ENCODE measurements at regions of chr9 and their contacts with region 1.

Region 1: DNA sequence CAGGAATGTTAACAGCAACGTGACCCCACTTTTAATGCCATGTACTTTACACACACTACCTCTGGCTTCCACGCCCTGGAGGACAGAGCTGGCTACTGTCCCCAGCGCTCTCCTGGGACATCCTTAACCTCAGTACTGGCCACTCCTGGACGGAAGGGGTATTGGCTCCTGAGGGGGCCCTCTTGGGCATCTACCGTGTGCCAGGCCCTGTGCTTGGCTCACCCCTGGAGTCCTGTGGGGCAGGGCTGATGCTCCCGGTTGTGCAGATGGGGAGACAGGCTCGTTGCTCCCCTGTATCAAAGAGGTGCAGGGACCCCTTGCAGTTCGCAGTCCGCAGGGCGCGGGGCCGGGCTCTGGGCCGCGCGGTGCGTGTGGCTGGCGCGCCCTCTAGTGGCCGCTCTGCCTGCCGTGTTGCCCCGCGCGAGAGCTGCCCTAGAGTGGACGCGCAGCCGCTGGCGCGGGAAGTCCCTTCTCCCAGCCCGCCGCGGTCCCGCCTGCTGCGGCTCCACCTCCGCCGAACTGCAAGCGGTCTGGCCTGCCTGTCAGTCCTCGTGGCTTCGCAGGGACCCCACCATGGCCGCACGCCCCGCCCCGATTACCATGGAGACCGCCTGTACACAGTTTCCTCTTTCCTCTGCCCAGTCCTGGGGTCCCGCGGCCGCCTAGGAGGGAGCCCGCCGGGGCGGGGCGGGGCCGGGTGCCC is at the start of gene WDR38:
- DNase-seq: peak; percentile 94
- H3K27ac ChIP-seq: peak within 1 kb of the TSS; percentile 69
- CTCF ChIP-seq: peak; percentile 100

Region 2: GRCh38 chr9:124735121-124735520 is 117.9 kb before region 1 on chr9:
- CTCF ChIA-PET with region 1: no interaction called
- POLR2A ChIA-PET with region 1: no interaction called
- DNase-seq: peak; percentile 80
- H3K27ac ChIP-seq: peak overlapping the region; percentile 57
- CTCF ChIP-seq: no peak

Region 3: DNA sequence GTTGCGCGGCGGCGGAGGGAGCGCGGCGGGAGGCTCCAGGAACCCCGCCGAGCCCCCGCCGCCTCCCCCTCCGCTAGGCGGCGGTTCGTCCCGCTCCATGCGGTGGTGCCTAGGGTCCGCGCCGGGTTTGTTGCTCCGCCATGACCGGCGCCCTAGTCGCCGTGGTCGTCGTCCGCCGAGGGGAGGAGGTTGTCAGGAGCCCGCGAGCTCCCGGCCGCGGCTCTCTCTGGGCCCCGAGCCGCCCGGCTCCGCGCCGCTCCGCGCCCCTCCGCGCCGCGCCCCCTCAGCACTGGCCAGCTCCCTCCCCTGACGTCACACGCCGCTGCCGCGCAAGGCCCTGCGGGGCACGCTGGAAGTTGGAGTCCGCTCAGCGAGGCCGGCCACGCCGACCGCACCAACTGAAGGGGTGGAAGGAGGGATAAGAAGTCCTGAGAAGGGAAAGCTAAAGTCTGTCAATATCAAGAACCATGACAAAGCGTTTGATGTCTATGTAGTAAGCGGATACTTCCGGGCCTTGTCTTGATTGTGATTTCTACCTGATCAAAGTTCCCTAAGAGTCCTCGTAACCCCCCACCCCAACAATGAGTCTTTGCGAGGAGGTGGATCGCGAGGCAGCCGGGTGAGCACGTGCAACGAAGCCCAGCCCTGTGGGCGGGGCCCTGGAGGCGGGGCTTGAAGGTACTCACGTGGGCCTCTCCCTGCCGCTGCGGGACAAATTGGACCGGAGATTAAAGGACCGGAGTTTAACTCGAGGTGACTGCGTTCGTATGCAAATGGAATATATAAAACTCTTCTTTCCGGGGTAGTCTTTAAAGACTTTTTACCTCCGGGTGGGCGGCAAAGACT is 81.7 kb before region 1 on chr9 and contains the start of gene NR6A1:
- CTCF ChIA-PET with region 1: interaction called, 761 read pairs
- POLR2A ChIA-PET with region 1: interaction called, 13 read pairs
- DNase-seq: peak; percentile 100
- H3K27ac ChIP-seq: peak within 1 kb of the TSS; percentile 79
- CTCF ChIP-seq: no peak; the same call in 1 of the 2 replicates

Region 4: GRCh38 chr9:124794902-124795491 is 58.0 kb before region 1 on chr9:
- CTCF ChIA-PET with region 1: interaction called, 40 read pairs
- POLR2A ChIA-PET with region 1: no interaction called
- DNase-seq: no peak
- H3K27ac ChIP-seq: peak overlapping the region; percentile 92
- CTCF ChIP-seq: no peak

Region 5: DNA sequence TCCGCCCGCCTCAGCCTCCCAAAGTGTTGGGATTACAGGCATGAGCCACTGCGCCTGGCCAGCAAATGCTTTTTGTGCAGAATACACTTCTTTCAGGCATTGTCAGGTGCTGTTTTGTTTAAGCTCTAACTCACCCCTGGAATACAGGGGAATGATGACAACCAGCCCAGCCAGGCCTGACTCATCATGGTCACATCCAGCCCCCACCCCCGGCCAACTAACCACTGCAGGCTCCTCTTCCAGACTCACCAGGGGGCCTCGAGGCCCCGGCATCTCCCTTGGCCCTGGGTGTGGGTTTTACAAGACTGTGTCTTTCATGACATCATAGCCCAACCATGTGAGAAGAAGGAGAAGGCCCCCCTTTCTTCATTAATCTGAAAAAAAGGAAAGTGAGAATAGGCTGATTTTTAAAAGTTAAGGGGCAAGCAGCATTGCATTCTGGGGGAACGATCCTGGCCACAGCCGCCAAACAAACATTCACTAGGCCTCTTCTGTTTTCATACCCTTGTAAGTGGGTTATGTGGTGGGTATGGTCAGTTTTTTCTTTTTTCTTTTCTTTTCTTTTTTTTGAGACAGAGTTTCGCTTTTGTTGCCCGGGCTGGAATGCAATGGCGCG is 40.5 kb before region 1 on chr9:
- CTCF ChIA-PET with region 1: interaction called, 53 read pairs
- POLR2A ChIA-PET with region 1: no interaction called
- DNase-seq: peak; percentile 96
- H3K27ac ChIP-seq: peak overlapping the region; percentile 94
- CTCF ChIP-seq: no peak

Region 6: GRCh38 chr9:124839612-124840299 is 13.2 kb before region 1 on chr9:
- CTCF ChIA-PET with region 1: interaction called, 101 read pairs
- POLR2A ChIA-PET with region 1: no interaction called
- DNase-seq: no peak
- H3K27ac ChIP-seq: peak overlapping the region; percentile 22
- CTCF ChIP-seq: no peak; the same call in 1 of the 2 replicates

Region 7: DNA sequence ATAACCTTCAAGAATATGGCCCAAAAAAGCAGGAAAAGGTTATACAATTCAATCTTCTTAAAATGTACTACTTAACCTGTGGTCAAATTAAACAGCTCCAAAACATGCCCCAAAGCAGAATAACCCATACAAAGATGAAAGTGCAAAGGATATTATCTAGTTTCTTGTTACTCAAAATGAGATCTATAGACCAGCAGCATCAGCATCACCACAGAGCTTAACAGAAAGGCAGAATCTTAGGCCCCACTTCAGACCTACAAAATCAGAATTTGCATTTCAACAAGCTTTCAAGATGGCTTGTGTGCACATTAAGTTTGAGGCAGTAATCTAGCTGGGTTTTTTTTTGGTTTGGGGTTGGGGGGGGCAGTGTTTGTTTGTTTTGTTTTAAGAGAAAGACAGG is 236.4 kb after region 1 on chr9:
- CTCF ChIA-PET with region 1: no interaction called
- POLR2A ChIA-PET with region 1: no interaction called
- DNase-seq: no peak
- H3K27ac ChIP-seq: no peak overlapping the region
- CTCF ChIP-seq: no peak

Measured in RWPE1 (cell line).